ENCODE measurements at regions of chr22 and their contacts with region 1.

Region 1: DNA sequence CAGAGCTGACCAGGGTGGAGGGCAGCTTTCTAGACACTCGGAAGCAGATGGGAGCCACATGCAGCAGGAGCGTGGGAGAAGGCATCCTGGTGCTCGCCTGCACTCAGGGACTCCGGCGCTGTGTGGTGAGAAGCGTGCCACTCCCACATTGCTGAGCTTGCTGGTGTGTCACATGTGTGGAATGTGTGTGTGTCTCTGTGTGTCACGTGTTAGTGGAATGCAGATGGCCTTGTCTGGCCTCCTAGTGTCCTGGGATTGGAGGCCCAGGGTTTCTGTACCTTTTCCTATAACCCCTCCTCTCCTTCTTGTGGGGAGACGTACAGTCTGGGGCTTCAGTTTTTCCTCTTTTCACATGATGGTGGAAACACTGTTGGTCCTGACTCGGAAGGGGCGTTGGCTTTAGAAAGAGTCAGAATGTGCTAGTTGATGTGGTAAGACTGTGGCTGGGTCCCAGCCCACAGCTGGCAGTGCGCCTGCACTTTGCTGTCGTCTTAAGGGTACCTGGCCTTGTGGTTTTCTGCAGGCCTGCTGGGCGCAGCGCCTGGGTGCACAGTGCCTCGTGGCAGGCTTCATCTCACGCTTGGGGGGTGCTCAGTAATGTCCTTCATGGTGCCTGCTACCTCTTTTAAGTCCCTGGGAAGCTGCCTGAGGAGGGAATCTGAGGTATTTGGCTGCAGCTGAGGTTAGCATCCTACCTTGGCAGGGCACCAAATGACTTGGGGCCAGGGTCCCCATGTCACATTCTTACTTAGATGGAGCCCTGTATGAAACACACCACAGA is 61.8 kb downstream of the MED15 start:
- DNase-seq: peak; percentile 97
- H3K4me3 ChIP-seq: no peak overlapping the region
- H3K27me3 ChIP-seq: no peaks in the 10 kb centered on the region
- CTCF ChIP-seq: no peak

Region 2: GRCh38 chr22:20514658-20515406 is 54.3 kb before region 1 on chr22:
- CTCF ChIA-PET with region 1: interaction called, 22 read pairs
- POLR2A ChIA-PET with region 1: interaction called, 3 read pairs
- DNase-seq: peak; percentile 75
- H3K4me3 ChIP-seq: no peak overlapping the region
- H3K27me3 ChIP-seq: no peaks in the 10 kb centered on the region
- CTCF ChIP-seq: no peak

Region 3: GRCh38 chr22:20531315-20532201 is 37.6 kb before region 1 on chr22:
- CTCF ChIA-PET with region 1: interaction called, 82 read pairs
- POLR2A ChIA-PET with region 1: no interaction called
- DNase-seq: no peak
- H3K4me3 ChIP-seq: no peak overlapping the region
- H3K27me3 ChIP-seq: no peaks in the 10 kb centered on the region
- CTCF ChIP-seq: no peak

Region 4: GRCh38 chr22:20545681-20546521 is 23.3 kb before region 1 on chr22:
- CTCF ChIA-PET with region 1: interaction called, 184 read pairs
- POLR2A ChIA-PET with region 1: no interaction called
- DNase-seq: no peak
- H3K4me3 ChIP-seq: no peak overlapping the region
- H3K27me3 ChIP-seq: no peaks in the 10 kb centered on the region
- CTCF ChIP-seq: no peak

Region 5: DNA sequence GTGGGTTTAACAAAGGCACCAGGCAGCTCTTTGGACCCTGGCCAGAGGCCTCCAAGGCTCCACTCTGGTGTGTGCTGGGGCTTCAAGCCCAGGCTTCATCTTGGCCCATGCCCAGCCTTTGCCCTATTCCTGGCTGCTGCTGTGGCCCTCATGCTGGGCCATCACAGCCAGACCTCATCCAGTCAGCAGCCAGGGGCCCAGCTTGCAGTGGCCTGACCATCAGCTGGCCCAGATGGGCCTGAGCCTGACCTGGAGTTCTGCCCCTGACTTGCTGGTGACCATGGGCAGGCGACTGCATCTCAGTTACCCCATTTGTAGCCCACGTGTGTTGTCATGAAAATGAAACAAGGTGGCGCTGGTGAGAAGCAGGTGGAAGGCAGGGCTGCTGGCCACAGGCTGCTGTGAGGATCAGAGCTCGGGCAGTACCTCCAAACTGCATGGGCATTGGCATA is 14.3 kb after region 1 on chr22:
- CTCF ChIA-PET with region 1: interaction called, 21 read pairs
- POLR2A ChIA-PET with region 1: no interaction called
- DNase-seq: no peak
- H3K4me3 ChIP-seq: no peak overlapping the region
- H3K27me3 ChIP-seq: no peaks in the 10 kb centered on the region
- CTCF ChIP-seq: no peak

Measured in BJ (cell line).